ENCODE measurements at regions of chr5 and their contacts with region 1.

Region 1: GRCh38 chr5:78792345-78793145 is 144.0 kb upstream of the LHFPL2 start:
- DNase-seq: no peak
- H3K4me3 ChIP-seq: no peak overlapping the region
- H3K4me3 Mint-ChIP-seq: no peak overlapping the region
- H3K27ac Mint-ChIP-seq: no peak overlapping the region
- H3K4me1 ChIP-seq: peaks cover 28% of the 10 kb centered on the region
- H3K4me1 Mint-ChIP-seq: peaks cover 43% of the 10 kb centered on the region
- H3K27me3 ChIP-seq: no peaks in the 10 kb centered on the region
- H3K27me3 Mint-ChIP-seq: no peaks in the 10 kb centered on the region
- CTCF ChIP-seq: no peak

Region 2: GRCh38 chr5:78706825-78707224 is 85.7 kb before region 1 on chr5:
- CTCF ChIA-PET with region 1: no interaction called
- POLR2A ChIA-PET with region 1: no interaction called
- intact Hi-C with region 1: no loop called
- DNase-seq: no peak
- H3K4me3 ChIP-seq: no peak overlapping the region
- H3K4me3 Mint-ChIP-seq: no peak overlapping the region
- H3K27ac Mint-ChIP-seq: no peak overlapping the region
- H3K4me1 ChIP-seq: no peaks in the 10 kb centered on the region
- H3K4me1 Mint-ChIP-seq: no peaks in the 10 kb centered on the region
- H3K27me3 ChIP-seq: no peaks in the 10 kb centered on the region
- H3K27me3 Mint-ChIP-seq: no peaks in the 10 kb centered on the region
- CTCF ChIP-seq: no peak

Region 3: DNA sequence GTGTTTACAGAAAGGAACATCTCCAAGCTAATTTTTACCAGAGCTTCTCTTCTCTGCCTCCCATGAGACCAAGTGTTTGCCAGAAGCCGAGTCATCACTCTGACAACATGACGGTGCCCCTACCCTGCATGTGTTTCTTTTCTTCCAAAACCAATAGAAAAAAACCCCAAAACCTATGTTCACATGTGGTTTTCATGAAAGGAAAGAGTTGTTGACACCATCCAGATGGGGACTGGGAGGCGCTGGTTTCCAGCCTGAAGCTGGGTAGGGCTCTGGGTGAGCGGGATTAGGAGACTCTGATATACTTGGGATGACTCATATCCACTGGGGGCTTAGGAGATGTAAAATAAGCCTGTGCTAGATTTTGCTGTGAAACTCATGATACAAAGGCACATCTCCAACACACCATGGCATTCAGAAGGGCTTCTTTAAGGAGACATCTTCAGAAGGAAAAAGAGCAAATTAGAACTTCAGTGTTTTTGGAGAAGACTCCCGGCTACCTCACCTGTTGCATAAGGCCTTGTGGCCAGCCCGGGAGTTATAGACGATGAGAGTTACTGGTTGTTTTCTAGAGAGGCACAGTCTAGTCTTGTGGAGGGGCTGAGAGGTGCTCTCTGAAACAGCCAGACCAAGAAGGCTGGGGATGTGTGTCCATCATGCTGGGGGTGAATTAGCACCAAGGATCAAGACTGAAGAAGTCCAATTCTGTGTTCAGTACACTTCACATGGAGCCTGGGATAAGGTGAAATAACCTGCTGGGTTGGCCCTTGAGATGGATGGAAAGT is 35.1 kb before region 1 on chr5:
- CTCF ChIA-PET with region 1: no interaction called
- POLR2A ChIA-PET with region 1: no interaction called
- intact Hi-C with region 1: loop called (anchors 5 kb)
- DNase-seq: peak in 1 of 2 experiments; percentile 15
- H3K4me3 ChIP-seq: no peak overlapping the region
- H3K4me3 Mint-ChIP-seq: no peak overlapping the region
- H3K27ac Mint-ChIP-seq: peak overlapping the region; percentile 71
- H3K4me1 ChIP-seq: peaks cover 28% of the 10 kb centered on the region
- H3K4me1 Mint-ChIP-seq: peaks cover 35% of the 10 kb centered on the region
- H3K27me3 ChIP-seq: no peaks in the 10 kb centered on the region; the same call in 1 of the 2 replicates
- H3K27me3 Mint-ChIP-seq: no peaks in the 10 kb centered on the region
- CTCF ChIP-seq: no peak

Measured in Caco-2 (cell line).